HepG2 (cell line): ENCODE measurements at regions of chr5 and their contacts with region 1.

Region 1: GRCh38 chr5:57499262-57500050 is 16.8 kb upstream of the ACTBL2 start:
- DNase-seq: peak; percentile 5
- ATAC-seq: peak; percentile 72
- H3K4me3 ChIP-seq: no peak overlapping the region
- H3K27ac ChIP-seq: no peak overlapping the region
- H3K4me1 ChIP-seq: no peaks in the 10 kb centered on the region
- H3K27me3 ChIP-seq: peaks cover 0 to 8% of the 10 kb centered on the region in 2 experiments; a peak in 2 of 5 replicates
- CTCF ChIP-seq: peak; percentile 66
- EP300 ChIP-seq: no peak
- POLR2A ChIP-seq: no peak
- RAD21 ChIP-seq: no peak; the same call in 1 of the 2 replicates

Region 2: DNA sequence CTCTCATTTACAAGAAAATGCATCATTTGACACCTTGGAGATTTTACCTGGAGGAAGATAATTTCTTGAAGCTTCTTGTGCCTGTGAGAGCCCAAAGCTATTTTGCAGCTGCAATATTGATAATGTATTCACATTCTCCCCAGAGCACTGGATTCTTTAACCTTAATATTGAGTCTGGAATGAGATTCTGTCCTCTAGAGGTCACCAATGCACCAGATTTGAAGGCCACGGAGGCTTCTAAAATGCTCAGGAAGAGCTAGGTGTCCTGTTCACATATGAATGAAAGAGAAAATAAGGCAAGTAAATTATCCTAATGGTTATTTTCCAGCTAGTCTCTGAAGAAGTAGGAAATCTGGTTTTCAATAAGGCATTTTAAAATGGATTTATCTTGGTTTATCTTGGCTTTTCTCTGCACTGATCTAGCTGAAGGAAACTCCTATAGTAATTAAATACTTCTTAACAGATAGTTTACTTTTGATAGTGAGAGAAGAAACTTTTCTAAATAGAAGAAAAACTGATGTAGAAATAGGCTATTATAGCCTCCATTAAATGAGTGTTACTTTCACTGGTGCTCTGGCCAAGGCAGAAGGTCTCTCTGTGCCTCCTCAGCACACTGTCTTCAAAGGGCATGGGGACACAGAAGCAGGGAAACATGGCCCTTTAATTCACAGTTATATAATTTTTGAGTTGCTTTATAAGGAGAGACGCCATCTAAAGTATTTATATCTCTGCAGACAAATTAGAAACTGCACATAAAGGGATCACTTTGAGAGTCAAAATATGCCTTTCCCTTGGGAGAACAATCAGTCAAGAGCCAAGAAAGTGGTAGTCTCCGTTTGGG is 280.1 kb after region 1 on chr5:
- CTCF ChIA-PET with region 1: no interaction called
- POLR2A ChIA-PET with region 1: no interaction called
- in situ Hi-C with region 1: no loop called
- intact Hi-C with region 1: loop called (anchors 2 kb)
- DNase-seq: peak; percentile 49
- ATAC-seq: peak; percentile 83
- H3K4me3 ChIP-seq: no peak overlapping the region
- H3K27ac ChIP-seq: no peak overlapping the region
- H3K4me1 ChIP-seq: peaks cover 31% of the 10 kb centered on the region
- H3K27me3 ChIP-seq: no peaks in the 10 kb centered on the region
- CTCF ChIP-seq: peak; percentile 66
- EP300 ChIP-seq: no peak
- POLR2A ChIP-seq: no peak
- RAD21 ChIP-seq: peak; percentile 38; the same call in 1 of the 2 replicates